ENCODE measurements at regions of chr6 and their contacts with region 1.

Region 1: GRCh38 chr6:41051873-41052272 is 1.1 kb upstream of the APOBEC2 start:
- DNase-seq: no peak
- H3K4me3 ChIP-seq: no peak overlapping the region
- CTCF ChIP-seq: no peak

Region 2: DNA sequence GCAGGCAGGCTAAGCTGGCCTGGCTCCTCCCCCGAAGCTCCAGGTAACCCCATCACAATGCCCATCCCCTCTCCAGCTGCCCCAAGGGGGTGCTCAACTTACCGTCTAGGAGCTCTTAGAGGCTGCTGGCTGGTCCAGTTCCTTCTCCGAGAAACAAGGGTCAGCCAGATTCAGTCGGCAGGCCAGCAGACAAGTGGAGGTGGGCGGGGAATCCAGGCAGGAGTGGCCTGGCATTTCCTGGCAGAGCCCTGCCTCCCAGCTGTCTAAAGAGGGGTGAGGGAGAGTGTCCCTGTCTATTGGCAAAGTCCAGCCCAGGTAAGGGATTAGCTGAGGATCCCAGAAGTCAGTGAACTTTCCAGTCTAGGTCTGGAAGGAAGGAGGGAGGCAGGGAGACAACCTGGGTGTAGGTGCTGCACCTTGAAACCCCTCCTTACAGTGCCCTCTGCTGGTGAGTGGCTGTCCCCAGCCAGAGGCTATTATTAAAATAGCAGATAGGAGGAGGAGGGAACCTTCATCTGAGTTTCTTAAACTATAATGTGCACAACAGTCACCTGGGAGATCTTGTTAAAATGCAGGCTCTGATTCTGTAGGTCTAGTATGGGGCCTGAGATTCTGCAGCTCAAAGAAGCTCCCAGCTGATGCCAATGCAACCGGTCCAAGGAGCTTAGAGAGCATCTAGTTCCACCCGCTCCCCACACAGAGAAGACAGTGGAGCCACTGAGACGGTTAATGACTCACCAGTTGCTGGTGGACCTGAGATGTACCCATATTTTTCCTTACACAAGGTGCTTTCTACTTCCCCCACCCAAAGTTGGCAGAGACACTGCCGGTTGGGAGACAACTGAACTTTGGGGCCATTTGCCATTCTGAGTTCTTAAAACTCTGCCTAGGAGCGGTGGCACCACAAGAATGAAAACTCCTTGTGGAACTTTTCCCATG is 12.5 kb before region 1 on chr6 and contains the start of gene UNC5CL:
- CTCF ChIA-PET with region 1: interaction called, 90 read pairs
- POLR2A ChIA-PET with region 1: no interaction called
- DNase-seq: no peak
- H3K4me3 ChIP-seq: no peak within 1 kb of the TSS
- CTCF ChIP-seq: peak; percentile 66

Region 3: GRCh38 chr6:41066867-41067304 is 15.0 kb after region 1 on chr6:
- CTCF ChIA-PET with region 1: interaction called, 21 read pairs
- POLR2A ChIA-PET with region 1: no interaction called
- DNase-seq: peak; percentile 57
- H3K4me3 ChIP-seq: no peak overlapping the region
- CTCF ChIP-seq: peak; percentile 58